GM12878 (cell line): ENCODE measurements at regions of chr9 and their contacts with region 1.

Region 1: GRCh38 chr9:76136986-76137385 is 246.5 kb downstream of the PCSK5 start:
- DNase-seq: no peak
- ATAC-seq: no peak
- H3K4me3 ChIP-seq: no peak overlapping the region
- H3K27ac ChIP-seq: no peak overlapping the region
- H3K4me1 ChIP-seq: no peaks in the 10 kb centered on the region
- H3K27me3 ChIP-seq: no peaks in the 10 kb centered on the region
- CTCF ChIP-seq: no peak
- EP300 ChIP-seq: no peak
- POLR2A ChIP-seq: no peak
- RAD21 ChIP-seq: no peak

Region 2: GRCh38 chr9:76166526-76166925 is 29.5 kb after region 1 on chr9:
- CTCF ChIA-PET with region 1: no interaction called
- POLR2A ChIA-PET with region 1: no interaction called
- RAD21 ChIA-PET with region 1: no interaction called
- SMC1A ChIA-PET with region 1: no interaction called
- in situ Hi-C with region 1: no loop called
- intact Hi-C with region 1: loop called (anchors 5 kb)
- DNase-seq: no peak
- ATAC-seq: no peak
- H3K4me3 ChIP-seq: no peak overlapping the region
- H3K27ac ChIP-seq: no peak overlapping the region
- H3K4me1 ChIP-seq: no peaks in the 10 kb centered on the region
- H3K27me3 ChIP-seq: no peaks in the 10 kb centered on the region; a peak in 2 of 4 replicates
- CTCF ChIP-seq: no peak
- EP300 ChIP-seq: no peak
- POLR2A ChIP-seq: no peak
- RAD21 ChIP-seq: no peak